ENCODE measurements at regions of chr1 and their contacts with region 1.

Region 1: GRCh38 chr1:119225831-119226230 is 85.4 kb upstream of the WARS2 start:
- DNase-seq: no peak
- ATAC-seq: peak in 1 of 4 donors; percentile 41
- H3K4me3 ChIP-seq: no peak overlapping the region
- H3K27ac ChIP-seq: no peak overlapping the region
- H3K4me1 ChIP-seq: peaks cover 11% of the 10 kb centered on the region
- H3K27me3 ChIP-seq: no peaks in the 10 kb centered on the region
- CTCF ChIP-seq: peak; percentile 21

Region 2: DNA sequence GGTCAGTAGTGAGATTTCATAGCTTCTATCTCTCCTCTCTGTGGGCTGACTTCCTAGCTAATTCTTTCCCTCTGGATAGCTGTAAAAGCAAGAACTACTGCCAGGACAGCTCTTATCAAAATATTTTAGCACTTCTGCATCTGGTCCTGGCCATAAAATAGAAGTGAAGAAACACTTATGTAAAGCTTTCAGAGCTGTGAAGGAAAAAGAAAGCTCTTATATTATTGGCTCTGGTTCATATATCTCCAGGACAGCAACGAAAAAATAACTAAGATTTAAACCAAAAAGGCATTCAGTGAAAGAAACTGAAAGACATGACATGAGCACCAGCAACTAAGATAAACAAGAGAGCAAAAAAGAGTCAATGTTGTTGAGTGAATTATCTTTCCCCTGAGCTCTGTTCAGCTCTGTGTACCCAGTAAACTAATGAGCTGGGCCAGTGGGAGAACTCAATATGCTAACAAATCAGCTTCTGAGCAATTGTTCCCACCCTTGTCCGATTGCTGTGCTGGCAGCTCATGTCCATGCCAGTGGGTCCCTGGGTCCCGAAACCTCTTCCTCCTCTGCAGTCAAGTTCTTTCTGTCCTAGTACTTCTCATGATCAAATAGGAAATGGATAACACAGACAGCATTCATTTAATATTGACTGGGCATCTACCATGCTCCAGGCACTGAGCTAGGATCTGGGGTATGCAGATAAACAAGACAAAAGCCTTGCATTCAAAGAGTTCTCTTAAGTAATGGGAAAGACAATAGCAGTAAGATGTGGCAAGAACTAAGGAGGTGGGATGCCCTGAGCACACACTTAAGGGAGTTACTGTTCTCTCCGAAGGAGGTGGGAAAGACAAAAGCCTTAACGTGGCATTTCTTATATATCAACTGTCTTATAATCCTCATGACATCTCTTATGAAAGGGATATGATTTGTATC is 1903.9 kb before region 1 on chr1:
- intact Hi-C with region 1: loop called in 1 of 2 experiments (anchors 5 kb)
- DNase-seq: no peak
- ATAC-seq: no peak
- H3K4me3 ChIP-seq: no peak overlapping the region
- H3K27ac ChIP-seq: no peak overlapping the region
- H3K4me1 ChIP-seq: no peaks in the 10 kb centered on the region
- H3K27me3 ChIP-seq: no peaks in the 10 kb centered on the region
- CTCF ChIP-seq: no peak

Region 3: DNA sequence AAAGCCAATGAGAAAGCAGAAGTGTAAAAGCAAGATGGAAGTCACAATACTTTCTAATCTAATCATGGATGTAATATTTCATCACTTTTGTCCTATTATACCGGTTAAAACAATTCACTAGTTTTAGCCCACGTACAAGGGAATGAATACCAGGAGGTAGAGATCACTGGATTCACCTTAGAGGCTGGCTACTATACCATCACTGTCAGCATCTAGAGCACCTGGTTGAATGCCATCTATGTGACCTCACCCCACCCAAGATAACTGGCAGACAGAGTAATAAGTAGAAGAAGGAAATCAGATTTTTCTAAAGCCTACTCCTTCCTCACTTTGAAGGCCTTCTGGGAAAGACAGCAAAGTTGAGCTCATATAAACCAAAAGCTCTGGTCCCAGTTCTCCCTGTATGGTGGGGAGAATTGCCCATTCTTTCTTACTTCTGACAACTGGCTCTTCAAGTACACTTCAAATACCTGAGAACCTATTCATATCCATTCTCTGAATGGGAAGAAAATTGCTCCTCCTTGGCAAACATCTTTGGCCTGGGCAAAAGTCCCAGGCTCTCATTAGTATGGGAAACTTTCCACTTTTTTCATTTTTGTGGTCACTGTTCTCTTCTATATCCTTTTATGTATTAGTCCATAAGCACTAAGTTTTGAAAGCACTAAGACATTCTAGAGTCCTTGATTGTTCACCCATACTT is 305.9 kb after region 1 on chr1:
- intact Hi-C with region 1: no loop called
- DNase-seq: no peak
- ATAC-seq: no peak
- H3K4me3 ChIP-seq: no peak overlapping the region
- H3K27ac ChIP-seq: no peak overlapping the region
- H3K4me1 ChIP-seq: no peaks in the 10 kb centered on the region
- H3K27me3 ChIP-seq: peaks cover 0 to 5% (median 0%) of the 10 kb centered on the region in 3 donors
- CTCF ChIP-seq: no peak

Measured in psoas muscle (tissue), 8 donors.